Right ventricle myocardium inferior (tissue), 1 donor: ENCODE measurements at regions of chr10 and their contacts with region 1.

Region 1: GRCh38 chr10:4849555-4850242 is 23.7 kb downstream of the AKR1E2 start:
- DNase-seq: peak; percentile 93
- ATAC-seq: peak; percentile 93

Region 2: DNA sequence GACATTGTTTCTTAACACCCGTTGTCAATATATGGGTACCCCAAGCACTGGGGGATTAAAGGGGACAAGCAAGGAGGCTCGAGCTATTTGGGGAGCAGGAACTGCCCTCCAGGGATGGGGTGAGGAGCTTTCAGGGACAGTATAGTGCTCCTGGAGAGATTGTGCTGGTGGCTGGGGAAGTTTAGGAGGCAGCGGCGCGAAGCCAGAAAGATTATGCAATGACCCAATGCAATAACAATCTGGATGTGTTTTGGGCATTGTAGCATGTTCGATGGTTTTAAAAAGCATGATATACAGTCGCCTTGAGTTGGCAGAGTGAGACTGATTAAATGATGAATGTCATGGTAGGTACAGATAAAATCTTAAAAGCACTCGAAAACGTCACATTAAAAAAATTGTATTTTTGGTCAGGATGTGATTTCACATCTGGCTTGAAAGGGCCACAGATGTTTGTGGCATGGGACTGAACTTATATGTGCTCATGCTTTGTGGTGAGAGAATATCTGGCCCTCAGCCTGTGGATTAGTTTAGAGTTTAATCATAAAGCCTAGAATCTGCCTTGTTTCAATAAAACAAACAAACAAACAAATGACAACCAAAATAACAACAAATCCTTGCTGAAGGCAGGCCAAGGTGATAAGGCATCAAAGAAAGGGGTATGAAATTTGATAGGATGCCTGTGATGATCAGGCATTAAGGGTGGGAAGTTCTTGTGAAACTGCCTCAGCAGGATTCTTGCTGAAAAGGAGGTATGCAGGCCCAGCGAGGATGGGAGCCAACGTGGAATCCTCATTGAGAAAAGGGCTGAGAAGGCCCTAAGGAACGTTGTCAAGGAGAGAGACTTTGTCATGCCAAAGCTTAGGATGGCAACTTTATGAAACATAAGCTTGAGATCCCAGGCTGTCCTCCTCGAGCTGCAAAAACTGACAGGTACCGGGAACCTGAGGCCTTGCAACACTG is 647.6 kb before region 1 on chr10:
- intact Hi-C with region 1: no loop called
- DNase-seq: no peak
- ATAC-seq: no peak

Region 3: DNA sequence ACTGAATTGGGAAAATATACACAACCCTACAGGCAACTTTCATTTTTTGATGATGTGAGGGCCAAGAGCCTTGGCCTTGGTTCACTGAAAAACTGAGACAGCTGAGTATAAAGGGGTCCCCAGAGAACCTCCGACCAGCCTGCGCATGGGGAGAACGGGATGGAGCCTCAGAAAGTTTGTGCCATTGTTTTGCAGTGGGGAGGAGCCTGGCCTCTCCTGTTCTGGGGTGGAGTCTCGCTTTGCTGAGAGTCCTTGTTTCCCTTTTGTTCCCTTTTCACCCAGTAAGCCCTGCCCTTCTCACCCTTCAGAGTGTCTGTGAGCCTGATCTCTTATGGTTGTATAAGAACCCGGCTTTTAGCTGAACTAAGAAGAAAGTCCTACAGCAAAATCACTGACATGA is 216.9 kb before region 1 on chr10:
- intact Hi-C with region 1: no loop called
- DNase-seq: no peak
- ATAC-seq: peak; percentile 61

Region 4: GRCh38 chr10:4825851-4826665 is 23.6 kb before region 1 on chr10 and contains the start of gene AKR1E2:
- intact Hi-C with region 1: no loop called
- DNase-seq: peak; percentile 96
- ATAC-seq: peak; percentile 93
- total RNA-seq, gene AKR1E2: 5.4 TPM

Region 5: DNA sequence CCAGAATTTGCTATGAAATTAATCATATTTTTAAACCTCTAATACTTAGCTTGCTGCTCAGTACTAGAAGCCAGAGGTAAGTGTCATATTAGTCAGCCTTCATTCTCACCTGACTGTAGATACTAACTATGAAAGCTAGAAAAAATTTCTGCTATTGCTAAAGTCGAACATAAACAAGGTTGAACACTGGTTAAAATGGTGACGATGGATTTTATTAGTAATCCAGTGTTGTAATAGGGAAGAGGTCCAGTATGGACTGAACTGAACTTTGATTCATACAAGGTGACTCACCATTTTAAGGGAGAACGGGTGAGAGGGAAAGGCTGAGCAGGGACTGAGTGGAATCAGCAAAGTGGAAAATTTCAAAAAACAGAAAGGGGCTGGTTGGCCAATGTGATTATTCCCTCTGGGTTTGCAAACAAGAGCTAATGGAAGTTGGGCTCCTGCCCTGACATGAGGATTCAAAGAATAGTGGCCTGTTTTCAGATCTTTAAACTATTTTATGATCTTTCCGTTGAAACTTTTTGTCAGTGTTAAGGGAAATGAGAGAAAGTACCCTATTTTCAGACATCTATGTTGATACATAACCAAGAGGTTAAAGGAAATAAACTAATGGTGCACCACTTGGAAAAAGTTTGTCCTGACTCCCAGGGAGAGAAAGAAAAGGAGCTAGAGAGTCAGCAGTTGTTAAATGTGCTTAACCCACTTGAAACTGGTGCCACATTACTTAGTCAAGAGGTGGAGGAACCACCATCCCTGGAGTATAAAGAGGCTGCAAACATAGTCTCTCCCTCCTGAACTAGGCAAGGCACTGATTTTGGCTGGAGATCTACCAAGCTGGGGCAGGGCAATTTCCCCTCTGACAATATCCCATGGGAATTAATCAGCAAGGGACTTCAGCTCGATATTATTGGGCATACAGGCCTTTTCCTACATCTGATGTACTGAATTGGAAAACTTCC is 98.2 kb after region 1 on chr10:
- intact Hi-C with region 1: loop called (anchors 5 kb)
- DNase-seq: no peak
- ATAC-seq: peak; percentile 93

Region 6: DNA sequence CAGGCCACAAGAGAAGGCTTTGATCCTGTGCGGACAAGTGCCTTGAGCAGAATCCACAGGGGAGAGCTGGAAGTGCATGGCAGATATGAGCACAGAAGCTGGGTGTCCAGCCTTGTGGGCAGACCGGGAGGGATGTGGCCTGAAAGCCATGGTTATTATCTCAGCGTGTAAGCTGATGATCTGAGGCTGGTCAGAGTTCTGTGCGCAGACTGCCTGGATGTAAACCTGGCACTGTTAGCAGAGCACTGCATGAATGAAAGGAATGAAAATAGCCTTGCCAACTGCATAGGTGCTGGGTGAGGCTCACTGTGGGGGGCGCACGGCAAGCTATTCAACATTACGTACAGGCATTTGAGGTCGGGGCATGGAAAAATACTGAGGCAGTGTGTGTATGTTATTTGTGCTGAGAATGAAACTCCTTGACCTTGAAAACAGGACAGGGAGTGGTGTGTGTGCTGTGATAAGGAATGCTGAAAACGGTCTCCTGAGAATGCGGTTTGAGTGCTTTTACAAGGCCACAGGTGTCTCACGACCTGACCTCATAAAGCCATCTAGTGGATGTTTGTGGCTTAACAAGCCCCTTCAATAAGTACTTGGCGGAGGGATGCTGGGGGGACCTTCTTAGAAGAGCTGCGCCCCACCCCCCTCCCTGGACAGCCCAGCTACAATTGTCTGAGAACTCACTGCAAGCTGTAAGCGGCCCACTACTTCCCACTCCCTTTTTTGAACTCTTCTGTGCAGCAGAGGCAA is 132.2 kb after region 1 on chr10:
- intact Hi-C with region 1: loop called (anchors 2 kb)
- DNase-seq: peak; percentile 62
- ATAC-seq: peak; percentile 47

Region 7: DNA sequence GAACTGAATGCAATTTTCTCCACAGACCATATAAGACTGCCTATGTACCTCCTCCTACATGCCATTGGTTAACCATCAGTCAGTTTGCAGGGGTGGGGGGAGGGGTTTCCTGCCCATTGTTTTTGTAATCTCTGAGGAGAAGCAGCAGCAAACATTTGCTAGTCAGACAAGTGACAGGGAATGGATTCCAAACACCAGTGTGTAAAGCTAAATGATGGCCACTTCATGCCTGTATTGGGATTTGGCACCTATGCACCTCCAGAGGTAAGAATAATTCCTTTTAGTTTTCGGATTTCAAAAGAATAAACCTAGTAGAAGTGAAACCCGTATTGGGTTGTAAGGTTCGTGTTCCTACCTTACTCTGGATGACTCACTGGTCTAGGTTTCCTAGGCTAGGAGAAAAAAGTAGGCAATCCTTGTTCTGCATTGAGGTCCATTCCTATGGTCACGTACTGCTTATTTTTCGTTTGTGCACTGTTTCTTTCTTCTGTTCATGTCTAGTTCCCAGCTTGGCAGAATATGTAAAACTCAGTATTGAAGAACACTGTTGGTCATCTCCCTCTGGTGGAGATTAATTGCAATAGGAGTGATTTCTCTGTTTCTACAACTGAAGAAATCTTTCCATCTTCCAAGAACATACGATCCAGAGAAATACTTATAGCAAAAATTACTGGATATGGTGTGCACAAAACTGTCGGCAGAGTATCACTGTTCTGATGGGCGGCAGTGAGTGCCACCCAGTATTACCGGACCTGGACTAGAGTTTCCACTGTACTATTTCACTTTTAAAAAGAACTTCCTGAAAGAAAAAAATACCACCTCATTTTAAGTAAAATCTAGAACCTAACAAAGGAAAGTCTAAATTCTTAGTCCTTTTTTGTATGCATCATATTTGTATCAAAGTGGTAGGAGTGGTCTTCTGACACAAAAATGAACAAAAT is 244.8 kb after region 1 on chr10 and contains the start of gene AKR1C3:
- intact Hi-C with region 1: loop called (anchors 1 kb)
- DNase-seq: no peak
- ATAC-seq: peak; percentile 91
- total RNA-seq, gene AKR1C3: 40.5 TPM

Region 8: GRCh38 chr10:5283305-5284158 is 433.8 kb after region 1 on chr10:
- intact Hi-C with region 1: loop called (anchors 1 kb)
- DNase-seq: no peak
- ATAC-seq: peak; percentile 95

Region 9: GRCh38 chr10:5385224-5385623 is 535.5 kb after region 1 on chr10:
- intact Hi-C with region 1: loop called (anchors 2 kb)
- DNase-seq: no peak
- ATAC-seq: no peak

Region 10: GRCh38 chr10:5434017-5434753 is 584.5 kb after region 1 on chr10:
- intact Hi-C with region 1: loop called (anchors 5 kb)
- DNase-seq: no peak
- ATAC-seq: peak; percentile 48